HCT116 (cell line): ENCODE measurements at regions of chr1 and their contacts with region 1.

Region 1: GRCh38 chr1:184051485-184052193 is at the start of gene TSEN15:
- DNase-seq: peak; percentile 61
- ATAC-seq: peak; percentile 96
- H3K4me3 ChIP-seq: peak within 1 kb of the TSS; percentile 76 to 81
- H3K27ac ChIP-seq: peak within 1 kb of the TSS; percentile 86
- H3K4me1 ChIP-seq: peaks cover 2 to 25% of the 10 kb centered on the region in 2 experiments; a peak in 3 of 4 replicates
- H3K27me3 ChIP-seq: no peaks in the 10 kb centered on the region; the same call in 1 of the 2 replicates
- CTCF ChIP-seq: no peak
- POLR2A ChIP-seq: peak; percentile 39
- RAD21 ChIP-seq: no peak
- total RNA-seq, gene TSEN15: 31.1 TPM

Region 2: GRCh38 chr1:183185941-183186490 is 865.6 kb before region 1 on chr1 and contains the start of gene LAMC2:
- CTCF ChIA-PET with region 1: no interaction called
- POLR2A ChIA-PET with region 1: no interaction called
- RAD21 ChIA-PET with region 1: no interaction called
- intact Hi-C with region 1: loop called (anchors 5 kb)
- DNase-seq: peak; percentile 95
- ATAC-seq: peak; percentile 96
- H3K4me3 ChIP-seq: peak within 1 kb of the TSS; percentile 70 to 72
- H3K27ac ChIP-seq: peak within 1 kb of the TSS; percentile 68
- H3K4me1 ChIP-seq: peaks cover 9 to 39% of the 10 kb centered on the region in 2 experiments
- H3K27me3 ChIP-seq: no peaks in the 10 kb centered on the region
- CTCF ChIP-seq: peak; percentile 33 to 61 (median 58); a peak in 4 of 6 replicates
- POLR2A ChIP-seq: peak; percentile 55
- RAD21 ChIP-seq: peak; percentile 82
- total RNA-seq, gene LAMC2: 22.2 TPM

Region 3: GRCh38 chr1:183635606-183636333 is 415.9 kb before region 1 on chr1 and contains the start of gene ARPC5:
- CTCF ChIA-PET with region 1: no interaction called
- POLR2A ChIA-PET with region 1: no interaction called
- RAD21 ChIA-PET with region 1: no interaction called
- intact Hi-C with region 1: loop called (anchors 2 kb)
- DNase-seq: peak; percentile 92
- ATAC-seq: peak; percentile 94
- H3K4me3 ChIP-seq: peak within 1 kb of the TSS; percentile 79 to 81
- H3K27ac ChIP-seq: peak within 1 kb of the TSS; percentile 85
- H3K4me1 ChIP-seq: peaks cover 6 to 22% of the 10 kb centered on the region in 2 experiments; a peak in 3 of 4 replicates
- H3K27me3 ChIP-seq: no peaks in the 10 kb centered on the region
- CTCF ChIP-seq: no peak
- POLR2A ChIP-seq: peak; percentile 86
- RAD21 ChIP-seq: no peak
- total RNA-seq, gene ARPC5: 71.5 TPM